ENCODE measurements at regions of chr9 and their contacts with region 1.

Region 1: GRCh38 chr9:125558453-125559092 is 148.4 kb downstream of the MAPKAP1 start:
- DNase-seq: peak; percentile 78
- H3K4me3 ChIP-seq: no peak overlapping the region
- H3K27ac ChIP-seq: no peak overlapping the region
- H3K4me1 ChIP-seq: peaks cover 5% of the 10 kb centered on the region
- H3K27me3 ChIP-seq: no peaks in the 10 kb centered on the region
- CTCF ChIP-seq: peak; percentile 78 to 81
- POLR2A ChIP-seq: no peak

Region 2: GRCh38 chr9:125479846-125480615 is 78.5 kb before region 1 on chr9:
- CTCF ChIA-PET with region 1: no interaction called
- POLR2A ChIA-PET with region 1: no interaction called
- dilution Hi-C with region 1: no loop called
- intact Hi-C with region 1: no loop called
- DNase-seq: no peak
- H3K4me3 ChIP-seq: no peak overlapping the region
- H3K27ac ChIP-seq: no peak overlapping the region
- H3K4me1 ChIP-seq: no peaks in the 10 kb centered on the region
- H3K27me3 ChIP-seq: no peaks in the 10 kb centered on the region
- CTCF ChIP-seq: no peak
- POLR2A ChIP-seq: no peak

Region 3: GRCh38 chr9:125521462-125522327 is 36.9 kb before region 1 on chr9:
- CTCF ChIA-PET with region 1: interaction called, 10 read pairs
- POLR2A ChIA-PET with region 1: no interaction called
- dilution Hi-C with region 1: no loop called
- intact Hi-C with region 1: no loop called
- DNase-seq: peak; percentile 86
- H3K4me3 ChIP-seq: no peak overlapping the region
- H3K27ac ChIP-seq: peak overlapping the region; percentile 80
- H3K4me1 ChIP-seq: peaks cover 52% of the 10 kb centered on the region
- H3K27me3 ChIP-seq: no peaks in the 10 kb centered on the region
- CTCF ChIP-seq: no peak
- POLR2A ChIP-seq: no peak

Region 4: DNA sequence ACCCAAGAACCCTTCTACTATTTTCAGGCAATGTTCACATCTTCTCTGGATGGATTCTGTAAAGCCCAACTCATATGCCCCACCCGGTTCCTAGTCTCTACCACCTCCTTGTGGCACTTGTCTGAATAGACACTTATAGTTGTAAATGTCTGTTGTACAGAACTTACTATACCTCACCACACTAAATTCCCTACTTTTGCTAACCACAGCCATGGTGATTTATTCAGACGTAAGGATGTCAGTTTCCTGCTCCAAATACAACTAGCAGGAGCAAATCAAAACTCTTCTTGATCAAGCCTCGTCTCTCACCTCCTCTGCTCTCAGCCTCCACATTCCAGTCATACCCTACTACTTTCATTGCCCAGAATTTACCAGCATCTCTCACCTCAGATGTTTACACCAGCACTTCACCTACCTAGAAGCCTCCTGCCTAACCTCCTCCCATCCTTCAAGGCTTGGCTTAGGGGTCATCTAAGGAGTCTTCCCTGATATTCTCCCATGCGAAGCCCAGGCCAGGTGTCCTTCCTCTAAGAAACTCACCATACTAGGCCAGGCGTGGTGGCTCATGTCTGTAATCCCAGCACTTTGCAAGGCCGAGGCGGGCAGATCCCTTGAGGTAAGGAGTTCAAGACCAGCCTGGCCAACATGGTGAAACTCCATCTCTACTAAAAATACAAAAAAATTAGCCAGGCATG is 73.0 kb after region 1 on chr9:
- CTCF ChIA-PET with region 1: interaction called, 20 read pairs
- POLR2A ChIA-PET with region 1: interaction called, 4 read pairs
- dilution Hi-C with region 1: no loop called
- intact Hi-C with region 1: loop called (anchors 1 kb)
- DNase-seq: peak; percentile 73
- H3K4me3 ChIP-seq: no peak overlapping the region
- H3K27ac ChIP-seq: peak overlapping the region; percentile 32
- H3K4me1 ChIP-seq: peaks cover 29% of the 10 kb centered on the region
- H3K27me3 ChIP-seq: no peaks in the 10 kb centered on the region
- CTCF ChIP-seq: peak; percentile 62 to 65
- POLR2A ChIP-seq: no peak

Region 5: GRCh38 chr9:125706661-125707471 is 148.3 kb after region 1 on chr9 and contains the start of gene MAPKAP1:
- CTCF ChIA-PET with region 1: interaction called, 8 read pairs
- POLR2A ChIA-PET with region 1: no interaction called
- dilution Hi-C with region 1: no loop called
- intact Hi-C with region 1: loop called (anchors 2 kb)
- DNase-seq: peak; percentile 95
- H3K4me3 ChIP-seq: peak within 1 kb of the TSS; percentile 75 to 85 (median 84)
- H3K27ac ChIP-seq: peak within 1 kb of the TSS; percentile 82
- H3K4me1 ChIP-seq: peaks cover 13% of the 10 kb centered on the region
- H3K27me3 ChIP-seq: no peaks in the 10 kb centered on the region
- CTCF ChIP-seq: no peak
- POLR2A ChIP-seq: peak; percentile 82
- total RNA-seq, gene MAPKAP1: 98.6 and 99.1 TPM in 2 replicates